Activated CD8-positive, alpha-beta T cell treated with anti-CD3 and anti-CD28 coated beads for 36 hours (primary cell): ENCODE measurements at regions of chr5 and their contacts with region 1.

Region 1: DNA sequence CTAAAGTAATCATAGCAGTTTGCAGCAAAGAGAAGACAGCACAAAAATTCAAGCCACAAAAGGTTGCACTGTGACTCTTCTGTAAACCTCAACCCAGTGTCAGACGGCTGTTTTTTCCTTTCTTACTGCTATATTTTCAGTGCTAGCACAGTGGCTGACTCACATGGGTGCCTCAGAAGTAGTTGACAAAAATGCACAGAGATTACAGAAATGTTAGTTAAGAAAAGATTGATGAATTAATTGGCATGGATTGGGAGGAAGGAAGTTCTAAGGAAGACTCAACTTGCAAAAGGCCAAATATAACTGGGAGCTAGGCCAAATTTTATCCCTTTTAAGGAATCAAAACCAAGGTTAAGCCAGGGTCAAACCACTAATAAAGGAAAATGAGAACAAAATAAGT is 43.7 kb upstream of the ITGA1 start:
- DNase-seq: peak; percentile 76
- ATAC-seq: peak; percentile 88
- H3K4me3 Mint-ChIP-seq: no peak overlapping the region
- H3K27ac Mint-ChIP-seq: peak overlapping the region; percentile 83
- H3K4me1 Mint-ChIP-seq: peaks cover 65% of the 10 kb centered on the region
- H3K27me3 Mint-ChIP-seq: no peaks in the 10 kb centered on the region
- CTCF ChIP-seq: no peak

Region 2: GRCh38 chr5:52544738-52545137 is 199.2 kb before region 1 on chr5:
- CTCF ChIA-PET with region 1: no interaction called
- POLR2A ChIA-PET with region 1: no interaction called
- intact Hi-C with region 1: no loop called
- DNase-seq: no peak
- ATAC-seq: no peak
- H3K4me3 Mint-ChIP-seq: no peak overlapping the region
- H3K27ac Mint-ChIP-seq: no peak overlapping the region
- H3K4me1 Mint-ChIP-seq: no peaks in the 10 kb centered on the region
- H3K27me3 Mint-ChIP-seq: peaks cover 2% of the 10 kb centered on the region
- CTCF ChIP-seq: no peak

Region 3: GRCh38 chr5:52725065-52725746 is 18.8 kb before region 1 on chr5:
- CTCF ChIA-PET with region 1: no interaction called
- POLR2A ChIA-PET with region 1: interaction called, 4 read pairs
- intact Hi-C with region 1: loop called (anchors 2 kb)
- DNase-seq: peak; percentile 76
- ATAC-seq: peak; percentile 99
- H3K4me3 Mint-ChIP-seq: no peak overlapping the region
- H3K27ac Mint-ChIP-seq: peak overlapping the region; percentile 81
- H3K4me1 Mint-ChIP-seq: peaks cover 48% of the 10 kb centered on the region
- H3K27me3 Mint-ChIP-seq: no peaks in the 10 kb centered on the region
- CTCF ChIP-seq: no peak